ENCODE measurements at regions of chr1 and their contacts with region 1.

Region 1: GRCh38 chr1:171485375-171486047 is at the start of gene PRRC2C:
- DNase-seq: peak; percentile 80 to 95 (median 94)
- ATAC-seq: peak; percentile 93
- H3K4me3 ChIP-seq: peak within 1 kb of the TSS; percentile 93
- H3K4me3 Mint-ChIP-seq: peak within 1 kb of the TSS; percentile 83 to 99 (median 96)
- H3K27ac ChIP-seq: peak within 1 kb of the TSS; percentile 99
- H3K27ac Mint-ChIP-seq: peak within 1 kb of the TSS; percentile 92 to 100 (median 97)
- H3K4me1 ChIP-seq: peaks cover 34 to 46% of the 10 kb centered on the region in 2 donors
- H3K4me1 Mint-ChIP-seq: peaks cover 39 to 54% (median 49%) of the 10 kb centered on the region in 7 donors
- H3K27me3 ChIP-seq: no peaks in the 10 kb centered on the region
- H3K27me3 Mint-ChIP-seq: no peaks in the 10 kb centered on the region
- total RNA-seq, gene PRRC2C: 256 to 341 (median 293) TPM

Region 2: DNA sequence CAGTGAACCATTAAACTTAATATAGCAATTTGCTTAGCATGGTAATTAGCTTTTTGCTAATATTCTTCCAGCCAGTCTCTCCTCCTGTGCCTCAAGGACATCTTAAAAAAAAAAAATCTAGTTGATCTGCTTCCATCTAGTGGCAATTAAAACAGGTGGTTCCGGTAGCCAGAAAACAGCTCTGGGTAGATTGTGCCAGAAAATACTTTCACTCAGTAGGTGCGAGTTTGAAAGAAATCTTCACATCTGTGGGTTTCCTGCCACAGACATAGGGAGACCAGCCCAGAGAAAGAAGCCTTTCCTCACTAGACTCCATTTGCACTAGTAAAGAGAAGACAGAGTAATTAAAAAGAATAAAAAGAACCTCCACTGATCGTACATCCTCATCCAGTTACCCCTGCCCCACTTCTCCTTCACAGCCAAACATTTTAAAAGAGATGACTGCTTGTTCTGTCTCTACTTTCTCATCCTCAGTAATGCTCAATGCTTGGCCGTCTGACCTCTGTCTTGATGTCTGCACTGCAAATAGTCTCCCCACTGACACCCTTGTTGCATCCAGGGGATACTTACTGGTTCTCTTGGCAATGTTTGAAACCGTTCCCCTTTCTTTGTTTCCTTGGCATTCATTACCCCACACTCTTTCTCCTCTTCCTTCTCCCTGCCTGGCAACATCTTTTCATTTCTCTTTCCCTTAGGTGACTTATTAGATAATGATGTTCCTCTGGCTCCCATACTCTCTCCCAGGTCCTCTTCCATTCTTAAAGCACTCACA is 1791.0 kb before region 1 on chr1:
- CTCF ChIA-PET with region 1: no interaction called
- POLR2A ChIA-PET with region 1: interaction called, 3 read pairs
- intact Hi-C with region 1: loop called in 1 of 2 experiments (anchors 5 kb)
- DNase-seq: peak in 7 of 9 donors; percentile 63 to 85 (median 76)
- ATAC-seq: peak; percentile 71
- H3K4me3 ChIP-seq: peak overlapping the region; percentile 18
- H3K4me3 Mint-ChIP-seq: peak overlapping the region in 9 of 10 donors; percentile 21 to 86 (median 71)
- H3K27ac ChIP-seq: peak overlapping the region; percentile 70
- H3K27ac Mint-ChIP-seq: peak overlapping the region in 4 of 9 donors; percentile 86 to 98 (median 94)
- H3K4me1 ChIP-seq: peaks cover 91 to 92% of the 10 kb centered on the region in 2 donors
- H3K4me1 Mint-ChIP-seq: peaks cover 0 to 89% (median 74%) of the 10 kb centered on the region in 7 donors
- H3K27me3 ChIP-seq: no peaks in the 10 kb centered on the region
- H3K27me3 Mint-ChIP-seq: no peaks in the 10 kb centered on the region

Region 3: DNA sequence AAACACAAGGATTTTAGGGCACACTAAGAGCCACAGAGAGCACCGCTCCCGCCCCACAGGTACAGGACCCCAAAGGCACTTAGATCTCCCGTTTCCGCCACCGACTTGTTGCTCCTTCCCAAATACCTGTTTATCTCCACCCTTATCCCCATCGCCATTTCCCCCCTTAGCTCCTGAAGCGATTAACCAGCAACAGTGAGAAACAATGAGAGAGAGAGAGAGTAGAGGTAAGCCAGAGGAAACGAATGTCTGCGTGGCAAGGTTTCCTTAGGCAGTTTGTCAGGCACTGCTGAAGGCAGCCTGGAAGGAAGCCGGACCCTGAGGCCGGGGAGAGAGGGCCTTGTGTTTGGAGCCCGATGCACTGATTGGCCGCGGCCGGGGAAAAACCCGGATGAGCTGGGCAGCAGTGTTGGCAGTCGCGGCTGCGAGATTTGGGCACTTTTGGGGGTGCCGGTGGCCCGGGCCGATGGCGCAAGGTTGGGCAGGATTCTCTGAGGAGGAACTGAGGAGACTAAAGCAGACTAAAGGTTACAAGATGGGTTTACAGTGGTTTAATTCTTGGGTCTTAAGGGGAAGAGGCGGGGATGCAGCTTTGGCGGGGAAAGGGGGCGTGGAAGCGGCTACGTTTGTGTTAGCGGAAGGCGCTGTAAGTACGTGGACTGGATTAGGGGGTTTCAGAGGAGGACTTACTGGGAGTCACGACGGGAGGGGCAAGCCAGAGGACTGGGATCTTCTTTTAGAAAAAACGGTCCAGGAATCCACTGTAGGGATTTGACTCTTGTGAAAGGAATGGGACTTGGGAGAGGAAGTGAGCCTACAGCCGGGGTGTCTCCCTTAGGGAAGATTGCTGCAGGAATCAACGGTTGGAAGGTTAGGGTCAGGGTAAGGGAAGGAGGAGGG is 953.5 kb before region 1 on chr1 and contains the start of gene GORAB:
- CTCF ChIA-PET with region 1: no interaction called
- POLR2A ChIA-PET with region 1: no interaction called
- intact Hi-C with region 1: loop called in 1 of 2 experiments (anchors 5 kb)
- DNase-seq: peak; percentile 74 to 87 (median 83)
- ATAC-seq: peak; percentile 97
- H3K4me3 ChIP-seq: peak within 1 kb of the TSS; percentile 95
- H3K4me3 Mint-ChIP-seq: no peak within 1 kb of the TSS
- H3K27ac ChIP-seq: peak within 1 kb of the TSS; percentile 91
- H3K27ac Mint-ChIP-seq: peak within 1 kb of the TSS in 1 of 9 donors; percentile 36
- H3K4me1 ChIP-seq: peaks cover 8 to 14% of the 10 kb centered on the region in 2 donors
- H3K4me1 Mint-ChIP-seq: peaks cover 7 to 29% (median 19%) of the 10 kb centered on the region in 7 donors
- H3K27me3 ChIP-seq: no peaks in the 10 kb centered on the region
- H3K27me3 Mint-ChIP-seq: peaks cover 0 to 20% (median 0%) of the 10 kb centered on the region in 5 donors
- total RNA-seq, gene GORAB: 10.9 to 25.3 (median 22.7) TPM

Region 4: DNA sequence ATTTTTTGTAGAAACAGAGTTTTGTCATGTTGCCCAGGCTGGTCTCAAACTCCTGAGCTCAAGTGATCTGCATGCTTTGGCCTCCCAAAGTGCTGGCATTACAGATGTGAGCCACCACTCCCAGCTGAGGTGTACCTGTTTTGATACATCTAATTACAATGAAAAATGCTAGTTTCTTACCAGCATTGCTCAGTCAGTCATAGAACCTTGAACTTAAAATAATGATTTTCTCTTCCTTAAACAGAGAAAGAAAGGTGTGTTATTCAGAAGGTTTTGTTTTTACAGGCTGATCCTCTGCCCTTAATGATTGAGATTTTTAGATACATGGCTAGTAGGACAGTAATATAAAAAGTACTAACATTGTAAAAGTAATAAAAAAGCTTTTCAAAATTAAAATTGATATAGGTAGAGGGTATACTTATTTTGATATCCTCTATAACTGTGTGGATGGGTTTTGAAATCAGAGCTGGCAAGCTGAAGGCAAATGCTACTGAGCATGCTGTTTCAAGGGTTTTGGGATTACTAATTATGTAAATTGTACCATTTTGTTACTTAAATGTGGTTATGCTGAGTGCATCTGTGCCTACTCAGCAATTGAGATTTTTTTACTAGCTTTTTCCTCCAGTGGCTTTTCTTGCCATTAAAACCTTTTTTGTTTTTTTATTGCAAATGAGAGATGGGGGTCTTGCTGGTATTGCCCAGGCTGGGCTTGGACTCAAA is 16.0 kb after region 1 on chr1:
- CTCF ChIA-PET with region 1: interaction called, 3 read pairs
- POLR2A ChIA-PET with region 1: interaction called, 4 read pairs
- intact Hi-C with region 1: loop called in 1 of 2 experiments (anchors 2 kb)
- DNase-seq: no peak
- ATAC-seq: peak; percentile 7
- H3K4me3 ChIP-seq: no peak overlapping the region
- H3K4me3 Mint-ChIP-seq: peak overlapping the region in 7 of 10 donors; percentile 22 to 55 (median 43)
- H3K27ac ChIP-seq: peak overlapping the region; percentile 10
- H3K27ac Mint-ChIP-seq: peak overlapping the region in 4 of 9 donors; percentile 49 to 68 (median 57)
- H3K4me1 ChIP-seq: peaks cover 30 to 37% of the 10 kb centered on the region in 2 donors
- H3K4me1 Mint-ChIP-seq: peaks cover 66 to 97% (median 91%) of the 10 kb centered on the region in 7 donors
- H3K27me3 ChIP-seq: no peaks in the 10 kb centered on the region
- H3K27me3 Mint-ChIP-seq: no peaks in the 10 kb centered on the region

Region 5: DNA sequence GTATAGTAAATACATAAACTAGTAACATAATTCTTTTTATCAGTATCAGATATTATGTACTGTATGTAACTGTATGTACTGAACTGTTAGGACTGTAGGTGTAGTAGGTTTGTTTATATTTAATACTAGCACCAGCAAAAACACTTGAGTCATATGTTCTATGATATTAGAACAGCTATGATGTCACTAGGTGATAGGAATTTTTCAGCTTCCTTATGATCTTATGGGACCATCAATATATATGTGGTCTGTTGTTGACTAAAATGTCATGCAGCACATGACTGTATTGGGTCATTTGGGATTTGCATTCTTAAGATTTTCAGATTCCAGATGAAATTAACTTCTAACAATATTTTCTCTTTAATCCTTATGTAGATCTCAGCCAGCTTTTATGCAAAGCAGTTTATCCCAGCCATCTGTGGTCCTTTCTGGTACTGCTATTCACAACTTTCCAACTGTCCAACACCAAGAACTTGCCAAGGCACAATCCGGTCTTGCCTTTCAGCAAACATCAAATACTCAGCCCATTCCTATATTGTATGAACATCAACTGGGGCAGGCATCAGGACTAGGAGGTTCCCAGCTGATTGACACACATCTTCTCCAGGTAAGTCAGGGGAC is 98.2 kb after region 1 on chr1:
- CTCF ChIA-PET with region 1: interaction called, 3 read pairs
- POLR2A ChIA-PET with region 1: interaction called, 6 read pairs
- intact Hi-C with region 1: loop called in 1 of 2 experiments (anchors 5 kb)
- DNase-seq: no peak
- ATAC-seq: no peak
- H3K4me3 ChIP-seq: no peak overlapping the region
- H3K4me3 Mint-ChIP-seq: no peak overlapping the region
- H3K27ac ChIP-seq: no peak overlapping the region
- H3K27ac Mint-ChIP-seq: peak overlapping the region in 4 of 9 donors; percentile 1 to 28 (median 8)
- H3K4me1 ChIP-seq: no peaks in the 10 kb centered on the region
- H3K4me1 Mint-ChIP-seq: peaks cover 4 to 33% (median 8%) of the 10 kb centered on the region in 7 donors
- H3K27me3 ChIP-seq: no peaks in the 10 kb centered on the region
- H3K27me3 Mint-ChIP-seq: no peaks in the 10 kb centered on the region

Region 6: GRCh38 chr1:171683870-171684269 is 198.4 kb after region 1 on chr1:
- CTCF ChIA-PET with region 1: no interaction called
- POLR2A ChIA-PET with region 1: no interaction called
- intact Hi-C with region 1: no loop called
- DNase-seq: no peak
- ATAC-seq: no peak
- H3K4me3 ChIP-seq: no peak overlapping the region
- H3K4me3 Mint-ChIP-seq: no peak overlapping the region
- H3K27ac ChIP-seq: no peak overlapping the region
- H3K27ac Mint-ChIP-seq: no peak overlapping the region
- H3K4me1 ChIP-seq: no peaks in the 10 kb centered on the region
- H3K4me1 Mint-ChIP-seq: peaks cover 0 to 2% (median 0%) of the 10 kb centered on the region in 7 donors
- H3K27me3 ChIP-seq: no peaks in the 10 kb centered on the region
- H3K27me3 Mint-ChIP-seq: peaks cover 0 to 6% (median 4%) of the 10 kb centered on the region in 5 donors

Region 7: DNA sequence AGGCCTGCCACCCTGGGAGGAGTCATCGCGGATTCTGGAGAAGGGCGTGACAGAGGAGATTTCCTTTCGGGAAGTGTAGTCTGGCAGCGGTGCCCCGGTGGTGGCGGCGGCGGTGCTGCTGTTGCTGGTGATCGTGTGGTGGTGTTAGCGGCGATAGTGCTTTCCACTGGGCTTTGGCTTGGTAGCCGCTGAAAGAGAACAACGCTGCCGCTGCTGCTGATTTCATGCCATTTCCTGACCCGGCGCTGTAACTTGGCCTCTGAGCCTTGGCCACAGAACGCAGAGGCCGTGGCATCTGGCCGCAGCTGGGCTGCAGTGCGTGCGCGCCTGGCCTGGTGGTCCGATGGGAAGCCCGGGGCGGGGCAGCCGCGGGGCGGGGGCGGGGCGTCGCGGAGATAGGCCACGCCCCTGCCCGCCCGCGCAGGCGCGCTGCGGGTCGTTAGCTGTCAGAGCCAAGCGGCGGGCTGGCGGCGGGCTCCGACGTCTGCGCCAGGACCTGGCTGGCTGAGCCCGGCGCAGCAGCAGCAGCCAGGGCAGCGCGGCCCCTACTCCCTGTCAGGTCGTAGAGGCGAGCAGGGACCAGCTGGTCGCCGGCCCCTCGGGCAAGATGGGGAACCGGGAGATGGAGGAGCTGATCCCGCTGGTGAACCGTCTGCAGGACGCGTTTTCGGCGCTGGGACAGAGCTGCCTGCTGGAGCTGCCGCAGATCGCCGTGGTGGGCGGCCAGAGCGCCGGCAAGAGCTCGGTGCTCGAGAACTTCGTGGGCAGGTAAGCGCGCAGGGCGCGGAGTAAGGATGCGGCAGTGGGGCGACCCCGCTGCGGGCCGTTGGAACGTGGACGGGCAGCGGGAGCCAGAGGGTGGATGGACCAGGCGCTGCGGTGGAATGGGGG is 355.8 kb after region 1 on chr1 and contains the start of gene DNM3:
- CTCF ChIA-PET with region 1: no interaction called
- POLR2A ChIA-PET with region 1: interaction called, 4 read pairs
- intact Hi-C with region 1: loop called (anchors 2 to 5 kb)
- DNase-seq: peak; percentile 71 to 90 (median 86)
- ATAC-seq: peak; percentile 97
- H3K4me3 ChIP-seq: peak within 1 kb of the TSS; percentile 80
- H3K4me3 Mint-ChIP-seq: peak within 1 kb of the TSS; percentile 85 to 93 (median 90)
- H3K27ac ChIP-seq: peak within 1 kb of the TSS; percentile 64
- H3K27ac Mint-ChIP-seq: peak within 1 kb of the TSS; percentile 76 to 95 (median 83)
- H3K4me1 ChIP-seq: peaks cover 0 to 6% of the 10 kb centered on the region in 2 donors
- H3K4me1 Mint-ChIP-seq: peaks cover 15 to 19% (median 18%) of the 10 kb centered on the region in 7 donors
- H3K27me3 ChIP-seq: peaks cover 3 to 16% of the 10 kb centered on the region in 2 donors
- H3K27me3 Mint-ChIP-seq: peaks cover 12 to 44% (median 16%) of the 10 kb centered on the region in 5 donors
- total RNA-seq, gene DNM3: 1.9 to 2.5 (median 2.1) TPM